ENCODE measurements at regions of chrX and their contacts with region 1.

Region 1: DNA sequence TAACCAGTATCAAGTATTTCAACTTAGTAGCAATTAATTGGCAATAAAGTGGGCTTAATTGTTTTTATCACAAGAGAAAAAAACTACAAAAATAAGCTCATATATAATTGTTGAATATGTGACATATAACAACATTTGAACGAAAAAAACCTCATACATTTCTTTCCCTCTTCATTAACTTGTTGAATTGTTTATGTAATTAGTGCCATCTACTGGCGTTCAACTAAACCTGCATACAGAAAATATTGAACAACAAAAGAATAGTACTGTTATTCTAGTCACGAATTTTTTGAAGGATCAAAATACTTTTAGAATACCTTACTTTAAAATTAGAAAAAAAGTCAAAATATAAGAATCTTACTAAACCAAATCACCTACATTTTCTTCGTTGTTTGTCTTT is 586.5 kb upstream of the FTHL17 start:
- DNase-seq: no peak
- H3K4me3 ChIP-seq: no peak overlapping the region
- H3K27ac ChIP-seq: no peak overlapping the region
- H3K4me1 ChIP-seq: no peaks in the 10 kb centered on the region
- H3K27me3 ChIP-seq: no peaks in the 10 kb centered on the region
- CTCF ChIP-seq: peak in 2 of 3 donors; percentile 26 to 41
- EP300 ChIP-seq: no peak
- POLR2A ChIP-seq: no peak

Region 2: GRCh38 chrX:31036895-31037294 is 621.5 kb before region 1 on chrX:
- intact Hi-C with region 1: loop called in 2 of 4 experiments (anchors 5 to 10 kb)
- DNase-seq: peak in 4 of 5 donors; percentile 16 to 35 (median 23)
- H3K4me3 ChIP-seq: no peak overlapping the region
- H3K27ac ChIP-seq: no peak overlapping the region
- H3K4me1 ChIP-seq: no peaks in the 10 kb centered on the region
- H3K27me3 ChIP-seq: no peaks in the 10 kb centered on the region
- CTCF ChIP-seq: peak in 1 of 3 donors; percentile 23
- EP300 ChIP-seq: no peak
- POLR2A ChIP-seq: no peak

Region 3: GRCh38 chrX:31629195-31629594 is 29.2 kb before region 1 on chrX:
- intact Hi-C with region 1: no loop called
- DNase-seq: no peak
- H3K4me3 ChIP-seq: no peak overlapping the region
- H3K27ac ChIP-seq: no peak overlapping the region
- H3K4me1 ChIP-seq: no peaks in the 10 kb centered on the region
- H3K27me3 ChIP-seq: no peaks in the 10 kb centered on the region
- CTCF ChIP-seq: no peak
- EP300 ChIP-seq: no peak
- POLR2A ChIP-seq: no peak